Activated T-helper 1 cell treated with anti-CD3 and anti-CD28 coated beads, Interleukin-12 subunit alpha, Interleukin-12 subunit beta, Interleukin-2, Interleukin-4 antibody, amounts not matched to agents 30 ng/mL and 10 ng/mL and 1 ng/mL, durations not matched to agents 14 hours and 24 hours and 36 hours (primary cell): ENCODE measurements at regions of chr1 and their contacts with region 1.

Region 1: DNA sequence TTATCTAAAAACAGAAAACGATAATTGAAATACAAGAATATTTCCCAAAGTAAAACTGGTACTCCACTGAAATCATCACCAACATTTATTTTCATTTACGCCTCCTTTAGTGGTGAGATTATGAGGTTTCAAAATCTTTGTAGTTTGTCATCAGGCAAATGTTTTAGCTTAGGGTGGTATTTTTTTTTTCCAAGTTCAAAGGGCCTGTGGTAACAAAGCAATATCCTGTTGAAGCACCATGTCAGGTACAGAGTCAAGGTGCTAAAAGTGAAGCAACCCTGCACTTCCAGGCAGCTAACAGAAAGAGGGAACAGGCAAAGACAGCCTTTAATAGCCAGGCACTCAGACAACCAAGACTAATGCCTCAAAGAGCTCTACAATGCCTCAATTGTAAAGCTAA is 89.2 kb downstream of the JAK1 start:
- DNase-seq: peak; percentile 38
- H3K4me3 Mint-ChIP-seq: peak overlapping the region; percentile 62
- H3K27ac Mint-ChIP-seq: peak overlapping the region; percentile 51
- H3K4me1 Mint-ChIP-seq: peaks cover 61% of the 10 kb centered on the region
- H3K27me3 Mint-ChIP-seq: no peaks in the 10 kb centered on the region

Region 2: GRCh38 chr1:64898107-64898845 is 21.1 kb after region 1 on chr1:
- intact Hi-C with region 1: loop called (anchors 2 kb)
- DNase-seq: no peak
- H3K4me3 Mint-ChIP-seq: no peak overlapping the region
- H3K27ac Mint-ChIP-seq: peak overlapping the region; percentile 3
- H3K4me1 Mint-ChIP-seq: peaks cover 71% of the 10 kb centered on the region
- H3K27me3 Mint-ChIP-seq: no peaks in the 10 kb centered on the region

Region 3: DNA sequence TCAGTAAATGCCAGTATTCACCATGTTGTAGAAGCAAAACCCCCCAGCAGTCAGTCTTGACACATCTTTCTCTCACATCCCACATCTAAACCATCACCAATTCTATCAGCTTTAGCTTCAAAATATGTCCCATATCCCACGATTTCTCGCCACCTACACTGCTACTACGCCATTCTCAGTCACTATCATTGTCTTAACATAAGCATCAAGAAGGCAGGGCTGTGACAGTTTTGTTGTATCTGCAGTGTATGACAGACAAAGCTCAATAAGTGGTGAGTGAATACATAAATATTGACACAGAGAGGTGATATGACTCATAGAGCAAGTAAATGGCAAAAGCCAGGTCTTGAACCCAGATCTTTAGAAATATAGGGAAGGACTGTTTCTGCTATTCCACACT is 29.3 kb after region 1 on chr1:
- intact Hi-C with region 1: loop called (anchors 1 kb)
- DNase-seq: no peak
- H3K4me3 Mint-ChIP-seq: peak overlapping the region; percentile 34
- H3K27ac Mint-ChIP-seq: peak overlapping the region; percentile 78
- H3K4me1 Mint-ChIP-seq: peaks cover 54% of the 10 kb centered on the region
- H3K27me3 Mint-ChIP-seq: no peaks in the 10 kb centered on the region

Region 4: GRCh38 chr1:65044378-65044777 is 167.2 kb after region 1 on chr1:
- intact Hi-C with region 1: loop called (anchors 5 kb)
- DNase-seq: no peak
- H3K4me3 Mint-ChIP-seq: no peak overlapping the region
- H3K27ac Mint-ChIP-seq: no peak overlapping the region
- H3K4me1 Mint-ChIP-seq: peaks cover 34% of the 10 kb centered on the region
- H3K27me3 Mint-ChIP-seq: peaks cover 6% of the 10 kb centered on the region